SK-N-SH (cell line): ENCODE measurements at regions of chr14 and their contacts with region 1.

Region 1: DNA sequence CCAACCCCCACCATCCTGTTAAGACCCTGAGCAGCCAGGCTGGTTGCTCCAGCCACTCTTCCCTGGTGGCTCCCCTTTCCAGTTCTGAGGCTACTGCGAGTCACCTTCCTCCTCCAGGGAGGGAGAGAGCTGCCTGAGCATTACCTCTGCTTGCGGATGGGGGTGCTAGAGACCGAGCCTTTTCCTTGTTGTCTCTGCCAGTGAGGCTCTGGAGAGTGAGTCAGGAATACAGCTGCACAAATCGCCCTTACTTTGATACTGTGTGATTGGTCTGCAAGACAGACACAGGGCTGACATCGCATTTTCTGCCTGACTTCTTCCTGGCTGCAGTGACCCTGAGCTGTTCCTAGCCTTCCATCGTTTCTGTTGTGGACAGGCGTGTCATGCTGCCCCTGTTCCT is 94.3 kb downstream of the SLC25A47 start:
- DNase-seq: peak; percentile 85
- H3K4me3 ChIP-seq: no peak overlapping the region; a peak in 1 of 4 replicates
- H3K27ac ChIP-seq: peak overlapping the region; percentile 52 to 84
- H3K4me1 ChIP-seq: peaks cover 9 to 53% of the 10 kb centered on the region in 2 experiments
- H3K27me3 ChIP-seq: no peaks in the 10 kb centered on the region
- CTCF ChIP-seq: peak; percentile 88
- EP300 ChIP-seq: peak in 1 of 2 experiments; percentile 49; a peak in 1 of 4 replicates
- RAD21 ChIP-seq: peak; percentile 98

Region 2: GRCh38 chr14:100406505-100407131 is 10.8 kb before region 1 on chr14:
- CTCF ChIA-PET with region 1: interaction called, 16 read pairs
- POLR2A ChIA-PET with region 1: interaction called, 7 read pairs
- DNase-seq: no peak
- H3K4me3 ChIP-seq: no peak overlapping the region
- H3K27ac ChIP-seq: peak overlapping the region in 1 of 2 experiments; percentile 50; a peak in 1 of 4 replicates
- H3K4me1 ChIP-seq: peaks cover 0 to 75% of the 10 kb centered on the region in 2 experiments; a peak in 3 of 4 replicates
- H3K27me3 ChIP-seq: no peaks in the 10 kb centered on the region
- CTCF ChIP-seq: no peak
- EP300 ChIP-seq: no peak
- RAD21 ChIP-seq: no peak

Region 3: DNA sequence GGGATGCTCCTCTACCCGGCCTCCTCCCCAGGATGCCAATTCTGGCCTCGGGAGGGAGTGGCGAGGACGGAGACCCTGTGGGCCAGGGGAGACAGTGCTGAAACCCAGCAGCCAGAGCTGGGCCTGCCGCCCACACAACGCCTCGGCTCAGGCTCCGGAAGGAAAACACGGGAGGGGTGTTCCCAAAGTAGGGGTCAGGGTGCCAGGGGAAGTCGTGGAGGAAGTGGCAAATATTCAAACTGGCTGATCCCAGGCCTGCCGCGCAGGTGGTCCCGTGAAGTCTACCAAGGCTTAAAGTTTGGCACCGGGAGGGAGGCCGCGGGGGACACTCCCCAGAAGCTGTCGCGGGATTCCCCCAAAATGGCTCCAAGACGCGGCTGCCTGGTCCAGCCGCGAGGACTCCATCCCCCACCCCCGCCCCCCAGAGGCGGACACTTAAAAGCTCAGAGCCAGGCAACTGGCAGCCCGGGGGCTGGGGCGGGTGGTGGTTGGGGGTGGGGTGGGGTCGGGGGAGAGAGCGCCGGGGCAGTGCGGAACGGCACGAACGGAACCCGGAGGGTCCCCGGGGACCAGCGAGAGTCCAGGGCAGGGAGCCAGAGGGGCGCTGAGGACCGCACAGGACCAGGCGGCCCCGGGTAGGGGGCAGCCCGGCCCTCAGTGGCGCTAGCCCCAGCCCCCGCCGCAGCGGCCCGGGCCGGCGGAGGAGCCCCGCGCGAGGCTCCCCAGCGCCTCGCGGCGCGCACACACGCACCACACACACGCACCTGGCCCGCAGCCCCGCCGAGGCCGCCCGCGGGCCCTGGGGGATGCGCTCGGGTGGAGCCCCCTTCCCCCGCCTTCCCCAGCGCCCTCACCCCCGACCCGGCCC is 149.8 kb after region 1 on chr14:
- CTCF ChIA-PET with region 1: interaction called, 10 read pairs
- POLR2A ChIA-PET with region 1: interaction called, 19 read pairs
- DNase-seq: peak; percentile 85
- H3K4me3 ChIP-seq: peak overlapping the region; percentile 58 to 59; a peak in 3 of 4 replicates
- H3K27ac ChIP-seq: peak overlapping the region in 1 of 2 experiments; percentile 94; a peak in 2 of 4 replicates
- H3K4me1 ChIP-seq: peaks cover 0 to 66% of the 10 kb centered on the region in 2 experiments; a peak in 1 of 4 replicates
- H3K27me3 ChIP-seq: peaks cover 18% of the 10 kb centered on the region
- CTCF ChIP-seq: no peak
- EP300 ChIP-seq: no peak
- RAD21 ChIP-seq: no peak

Region 4: GRCh38 chr14:100586403-100587085 is 169.1 kb after region 1 on chr14:
- CTCF ChIA-PET with region 1: no interaction called
- POLR2A ChIA-PET with region 1: no interaction called
- DNase-seq: peak; percentile 88
- H3K4me3 ChIP-seq: peak overlapping the region; percentile 60 to 61
- H3K27ac ChIP-seq: peak overlapping the region in 1 of 2 experiments; percentile 91; a peak in 2 of 4 replicates
- H3K4me1 ChIP-seq: peaks cover 4 to 45% of the 10 kb centered on the region in 2 experiments; a peak in 3 of 4 replicates
- H3K27me3 ChIP-seq: peaks cover 4% of the 10 kb centered on the region; the same call in 1 of the 2 replicates
- CTCF ChIP-seq: no peak
- EP300 ChIP-seq: no peak
- RAD21 ChIP-seq: no peak

Region 5: DNA sequence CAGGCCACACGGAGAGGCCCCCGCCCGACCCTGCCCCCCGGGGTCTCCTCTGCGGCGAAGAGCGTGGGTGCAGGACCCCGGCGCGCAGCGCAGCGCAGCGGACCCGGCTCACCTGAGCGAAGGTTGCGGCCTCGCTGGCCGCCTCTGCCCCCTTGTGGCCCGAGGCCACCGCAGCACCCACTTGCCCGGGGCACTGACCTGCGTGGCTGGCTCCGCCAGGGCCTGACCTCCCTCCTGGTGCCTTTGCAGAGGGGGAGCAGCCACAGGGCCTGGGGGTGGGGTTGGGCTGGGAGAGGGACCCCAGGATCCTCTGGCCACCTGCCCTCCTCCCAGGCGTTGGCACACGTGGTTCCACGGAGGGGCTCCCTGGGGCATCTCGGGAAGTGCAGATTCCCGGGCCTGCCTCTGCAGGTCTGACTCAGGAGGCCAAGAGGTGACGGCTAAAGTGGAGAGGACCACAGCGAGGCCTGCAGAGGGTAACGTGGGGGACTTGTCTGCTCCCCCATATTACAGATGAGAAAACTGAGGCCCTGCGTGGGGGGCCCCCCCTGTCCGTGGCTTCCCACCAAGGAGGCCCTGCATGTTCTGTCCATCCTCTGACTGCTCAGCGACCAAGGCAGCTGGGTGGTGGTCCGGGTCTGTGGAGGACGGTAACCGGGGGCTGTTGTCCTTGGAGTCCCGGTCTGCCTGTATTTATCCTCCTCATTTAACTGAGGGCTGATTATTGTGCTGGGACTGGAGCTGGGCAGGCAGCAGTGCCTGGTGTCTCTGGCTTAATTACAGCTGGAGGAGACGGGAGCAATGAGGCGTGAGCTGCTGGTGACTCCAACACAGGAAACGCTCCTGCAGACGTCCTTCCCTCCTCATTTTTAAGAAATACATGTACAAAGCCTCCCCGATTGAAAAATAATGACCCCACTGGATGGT is 237.6 kb after region 1 on chr14:
- CTCF ChIA-PET with region 1: interaction called, 18 read pairs
- POLR2A ChIA-PET with region 1: interaction called, 4 read pairs
- DNase-seq: peak; percentile 84
- H3K4me3 ChIP-seq: no peak overlapping the region
- H3K27ac ChIP-seq: peak overlapping the region in 1 of 2 experiments; percentile 92; a peak in 2 of 4 replicates
- H3K4me1 ChIP-seq: peaks cover 0 to 75% of the 10 kb centered on the region in 2 experiments; a peak in 2 of 4 replicates
- H3K27me3 ChIP-seq: no peaks in the 10 kb centered on the region
- CTCF ChIP-seq: peak; percentile 59
- EP300 ChIP-seq: no peak
- RAD21 ChIP-seq: peak; percentile 58

Region 6: DNA sequence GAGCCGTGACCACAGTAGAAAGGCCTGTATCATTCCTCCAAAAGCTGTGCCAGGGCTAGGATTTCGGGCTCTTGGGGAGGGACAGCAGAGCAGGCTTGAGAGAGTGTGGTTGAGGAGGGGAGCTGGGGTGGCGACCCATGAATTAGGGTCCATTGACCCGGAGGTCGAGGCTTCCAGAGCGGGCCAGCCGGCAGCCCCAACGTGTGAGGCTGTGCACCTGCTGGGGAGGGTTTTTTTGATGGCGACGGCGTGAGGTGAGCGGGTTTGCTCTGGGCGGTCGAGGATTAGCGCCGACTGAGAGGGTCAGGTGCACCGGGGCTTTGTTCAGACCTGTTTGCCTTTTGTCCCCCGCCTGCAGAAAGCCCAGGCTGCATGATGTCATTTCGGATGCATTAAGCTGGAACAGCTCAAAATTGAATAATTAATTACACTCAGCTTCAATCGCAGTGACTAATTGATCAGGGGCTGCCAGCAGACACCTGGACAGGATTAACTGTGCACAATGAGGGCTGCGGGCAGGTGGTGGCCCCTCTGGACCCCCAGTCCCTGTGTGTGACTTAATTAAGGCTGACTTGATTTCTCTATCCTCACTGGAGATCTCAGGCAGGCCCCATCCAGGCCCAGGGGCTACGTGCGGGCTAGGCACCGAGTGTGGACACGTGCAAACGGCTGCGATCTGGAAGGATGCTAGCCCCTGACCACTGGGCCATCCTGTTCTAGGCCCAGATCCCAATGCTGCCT is 366.3 kb after region 1 on chr14:
- CTCF ChIA-PET with region 1: interaction called, 10 read pairs
- POLR2A ChIA-PET with region 1: interaction called, 4 read pairs
- DNase-seq: peak; percentile 84
- H3K4me3 ChIP-seq: no peak overlapping the region
- H3K27ac ChIP-seq: peak overlapping the region in 1 of 2 experiments; percentile 100; a peak in 2 of 4 replicates
- H3K4me1 ChIP-seq: peaks cover 0 to 87% of the 10 kb centered on the region in 2 experiments; a peak in 1 of 4 replicates
- H3K27me3 ChIP-seq: no peaks in the 10 kb centered on the region
- CTCF ChIP-seq: no peak
- EP300 ChIP-seq: peak in 1 of 2 experiments; percentile 98; a peak in 2 of 4 replicates
- RAD21 ChIP-seq: peak; percentile 23